ENCODE measurements at regions of chr3 and their contacts with region 1.

Region 1: GRCh38 chr3:192022412-192022811 is 561.4 kb downstream of the PYDC2 start:
- DNase-seq: peak; percentile 71
- H3K4me3 Mint-ChIP-seq: peak overlapping the region; percentile 38
- H3K27ac Mint-ChIP-seq: peak overlapping the region; percentile 80
- H3K4me1 Mint-ChIP-seq: peaks cover 16% of the 10 kb centered on the region
- H3K27me3 Mint-ChIP-seq: no peaks in the 10 kb centered on the region
- CTCF ChIP-seq: no peak

Region 2: DNA sequence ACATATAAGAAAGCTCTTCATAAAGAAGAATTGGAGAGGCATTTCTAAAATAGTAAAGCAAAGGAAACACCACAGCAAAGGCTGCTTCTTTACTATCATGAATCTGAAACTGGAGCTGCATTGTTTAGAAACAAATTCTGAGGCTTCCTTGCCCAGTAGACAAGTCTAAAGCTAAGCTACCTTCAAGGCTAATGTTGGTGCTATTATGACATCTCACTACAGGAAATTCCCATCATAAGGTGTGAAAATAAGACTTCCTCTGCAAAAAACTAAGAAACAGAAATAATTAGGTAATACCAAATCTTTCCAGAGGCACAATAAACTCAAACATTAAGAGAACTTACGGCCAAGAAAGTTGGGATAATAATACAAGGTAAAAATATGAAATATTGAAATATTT is 1811.8 kb before region 1 on chr3:
- CTCF ChIA-PET with region 1: no interaction called
- POLR2A ChIA-PET with region 1: no interaction called
- intact Hi-C with region 1: no loop called
- DNase-seq: no peak
- H3K4me3 Mint-ChIP-seq: no peak overlapping the region
- H3K27ac Mint-ChIP-seq: no peak overlapping the region
- H3K4me1 Mint-ChIP-seq: peaks cover 9% of the 10 kb centered on the region
- H3K27me3 Mint-ChIP-seq: no peaks in the 10 kb centered on the region
- CTCF ChIP-seq: no peak

Region 3: DNA sequence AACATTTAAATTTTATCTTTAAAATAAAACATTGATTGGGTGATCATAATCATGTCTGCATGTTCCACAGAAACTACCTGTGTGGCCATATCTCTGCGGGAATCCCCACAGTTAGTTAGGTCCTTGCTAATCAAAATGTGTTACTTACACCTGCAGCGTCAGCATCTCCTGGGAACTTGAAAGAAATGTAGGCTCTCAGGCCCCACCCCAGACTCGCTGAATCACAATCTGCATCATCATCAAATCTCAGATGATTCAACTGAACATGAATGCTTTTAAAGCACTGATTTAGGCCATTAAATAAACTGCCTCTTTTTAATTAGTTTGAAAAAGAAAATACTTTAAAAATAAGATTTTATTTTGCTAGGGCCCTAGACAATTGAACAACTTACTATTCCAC is 16.3 kb after region 1 on chr3:
- CTCF ChIA-PET with region 1: no interaction called
- POLR2A ChIA-PET with region 1: interaction called, 17 read pairs
- intact Hi-C with region 1: no loop called
- DNase-seq: peak; percentile 59
- H3K4me3 Mint-ChIP-seq: no peak overlapping the region
- H3K27ac Mint-ChIP-seq: no peak overlapping the region
- H3K4me1 Mint-ChIP-seq: peaks cover 6% of the 10 kb centered on the region
- H3K27me3 Mint-ChIP-seq: no peaks in the 10 kb centered on the region
- CTCF ChIP-seq: no peak

Measured in MCF 10A (cell line).